ENCODE measurements at regions of chr5 and their contacts with region 1.

Region 1: DNA sequence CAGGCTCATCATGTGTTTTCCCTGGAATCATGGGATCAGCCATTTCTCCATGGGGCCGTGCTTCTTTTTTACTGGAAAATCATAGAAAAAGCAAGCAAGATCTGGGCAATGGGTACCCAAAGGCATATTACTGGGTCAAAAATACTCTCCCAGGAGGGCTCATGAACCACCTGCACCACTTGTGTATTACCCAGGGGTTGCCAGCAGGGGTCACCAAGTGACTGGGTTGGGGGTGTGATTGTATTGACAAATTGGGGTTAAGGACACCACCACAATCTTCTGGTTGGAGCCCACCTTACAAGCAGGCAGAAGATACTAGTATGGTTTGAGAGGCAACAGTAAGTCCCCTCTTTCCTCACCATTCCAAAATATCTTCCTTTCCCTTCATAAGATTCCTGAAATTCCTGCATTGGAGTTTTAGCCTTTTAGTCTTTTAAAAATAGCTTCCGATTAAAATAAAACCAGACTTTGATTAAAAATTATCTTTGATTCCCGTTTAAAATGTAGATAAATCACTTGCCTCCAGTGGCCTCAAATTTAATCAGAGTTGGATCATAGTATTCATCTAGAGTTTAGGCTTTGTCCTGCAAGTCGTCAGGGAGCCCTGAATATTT is 603.3 kb downstream of the KIF4B start:
- DNase-seq: peak; percentile 45
- ATAC-seq: peak; percentile 50

Region 2: GRCh38 chr5:154568589-154568988 is 1048.3 kb before region 1 on chr5:
- intact Hi-C with region 1: no loop called
- DNase-seq: no peak
- ATAC-seq: no peak

Region 3: DNA sequence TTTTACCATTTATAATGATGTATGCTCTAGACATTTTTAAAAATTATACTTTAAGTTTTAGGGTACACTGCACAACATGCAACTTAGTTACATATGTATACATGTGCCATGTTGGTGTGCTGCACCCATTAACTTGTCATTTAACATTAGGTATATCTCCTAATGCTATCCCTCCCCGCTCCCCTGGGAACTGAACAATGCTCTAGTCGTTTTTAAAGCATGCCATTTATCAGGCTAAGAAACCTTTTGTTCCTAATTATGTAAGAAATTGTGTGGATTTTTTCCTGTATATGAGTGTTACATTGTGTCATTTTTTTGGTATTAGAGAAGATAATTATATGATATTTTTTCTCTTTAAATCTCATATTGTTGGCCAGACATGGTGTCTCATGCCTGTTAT is 637.3 kb after region 1 on chr5:
- intact Hi-C with region 1: no loop called
- DNase-seq: no peak
- ATAC-seq: no peak

Region 4: GRCh38 chr5:156824800-156825199 is 1207.9 kb after region 1 on chr5:
- intact Hi-C with region 1: loop called (anchors 10 kb)
- DNase-seq: no peak
- ATAC-seq: peak; percentile 70